Activated T-helper 2 cell treated with anti-CD3 and anti-CD28 coated beads, Interferon-gamma antibody, Interleukin-2, Interleukin-4, amounts not matched to agents 10 μg/mL and 5 μg/mL and 100 μg/mL, durations not matched to agents 14 hours and 24 hours and 36 hours (primary cell): ENCODE measurements at regions of chr2 and their contacts with region 1.

Region 1: GRCh38 chr2:84516234-84516986 is at the start of gene DNAH6:
- DNase-seq: peak; percentile 82
- H3K4me3 Mint-ChIP-seq: peak within 1 kb of the TSS; percentile 79
- H3K27ac Mint-ChIP-seq: no peak within 1 kb of the TSS
- H3K4me1 Mint-ChIP-seq: peaks cover 15% of the 10 kb centered on the region
- H3K27me3 Mint-ChIP-seq: peaks cover 21% of the 10 kb centered on the region
- total RNA-seq, gene DNAH6: 0.09 and 0.14 TPM in 2 replicates

Region 2: DNA sequence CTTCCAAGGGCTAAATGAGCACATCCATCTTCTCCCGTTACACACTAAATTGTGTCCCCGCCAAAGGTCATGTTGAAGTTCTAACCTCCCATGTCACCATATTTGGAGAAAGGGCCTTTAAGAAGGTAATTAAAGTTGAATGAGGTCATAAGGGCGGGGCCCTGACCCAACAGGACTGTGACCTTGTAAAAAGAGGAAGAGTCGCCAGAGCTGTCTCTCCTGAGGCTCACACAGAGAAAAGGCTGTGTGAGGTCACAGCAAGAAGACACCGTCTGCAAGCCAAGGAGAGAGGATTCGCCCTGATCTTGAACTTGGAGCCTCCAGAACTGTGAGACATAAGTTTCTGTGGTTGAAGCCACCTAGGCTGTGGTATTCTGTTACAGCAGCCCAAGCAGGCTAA is 340.4 kb after region 1 on chr2:
- intact Hi-C with region 1: loop called (anchors 5 kb)
- DNase-seq: peak; percentile 29
- H3K4me3 Mint-ChIP-seq: peak overlapping the region; percentile 62
- H3K27ac Mint-ChIP-seq: peak overlapping the region; percentile 85
- H3K4me1 Mint-ChIP-seq: peaks cover 74% of the 10 kb centered on the region
- H3K27me3 Mint-ChIP-seq: no peaks in the 10 kb centered on the region

Region 3: DNA sequence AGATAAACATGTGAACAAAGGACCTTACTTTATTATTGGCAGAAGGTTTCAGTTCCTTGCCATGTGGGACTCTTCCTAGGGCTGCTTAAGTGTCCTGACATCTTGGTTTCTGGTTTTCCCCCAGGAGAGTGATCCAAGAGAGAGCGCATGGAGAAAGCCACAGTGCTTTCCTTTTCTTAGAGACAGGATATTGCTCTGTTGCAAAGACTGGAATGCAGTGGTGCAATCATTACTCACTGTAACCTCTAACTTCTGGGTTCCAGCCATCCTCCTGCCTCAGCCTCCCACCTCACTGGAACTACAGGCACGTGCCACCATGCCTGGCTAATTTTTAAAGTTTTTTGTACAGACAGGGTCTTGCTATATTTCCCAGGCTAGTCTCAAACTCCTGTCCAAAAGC is 578.7 kb after region 1 on chr2:
- intact Hi-C with region 1: no loop called
- DNase-seq: no peak
- H3K4me3 Mint-ChIP-seq: no peak overlapping the region
- H3K27ac Mint-ChIP-seq: no peak overlapping the region
- H3K4me1 Mint-ChIP-seq: no peaks in the 10 kb centered on the region
- H3K27me3 Mint-ChIP-seq: peaks cover 8% of the 10 kb centered on the region